PC-9 (cell line): ENCODE measurements at regions of chr3 and their contacts with region 1.

Region 1: DNA sequence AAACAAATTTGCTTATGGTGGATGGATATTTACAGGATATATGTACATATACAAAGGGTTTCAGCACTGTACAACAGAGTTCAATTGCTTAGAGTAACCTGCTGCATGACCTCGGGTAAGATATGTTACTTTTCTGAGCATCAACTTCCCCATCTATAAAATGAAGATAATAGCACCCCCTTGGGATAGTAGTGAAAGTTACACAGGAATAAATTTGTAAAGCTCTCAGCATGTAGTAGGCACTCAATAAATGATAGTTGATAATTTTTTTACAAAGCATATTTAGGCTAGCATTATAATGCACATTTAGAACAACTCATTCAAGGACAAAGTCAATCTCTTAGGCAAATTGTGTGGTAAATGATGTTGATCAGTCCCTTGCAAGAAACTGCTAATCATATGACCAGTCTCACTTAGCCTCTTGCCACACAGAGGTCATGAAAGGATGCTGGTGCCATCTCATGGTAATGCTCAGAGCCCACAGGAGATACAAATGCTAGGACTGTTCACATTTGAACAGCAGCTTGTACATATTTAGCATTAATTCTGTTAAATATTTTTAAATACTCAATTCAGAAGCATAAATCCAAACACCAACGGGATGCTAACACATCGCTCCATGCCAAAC is 123.9 kb downstream of the MAGI1 start:
- DNase-seq: no peak
- H3K4me3 ChIP-seq: no peak overlapping the region
- H3K27ac ChIP-seq: no peak overlapping the region
- H3K4me1 ChIP-seq: no peaks in the 10 kb centered on the region
- H3K27me3 ChIP-seq: no peaks in the 10 kb centered on the region
- CTCF ChIP-seq: no peak; the same call in 1 of the 2 replicates

Region 2: DNA sequence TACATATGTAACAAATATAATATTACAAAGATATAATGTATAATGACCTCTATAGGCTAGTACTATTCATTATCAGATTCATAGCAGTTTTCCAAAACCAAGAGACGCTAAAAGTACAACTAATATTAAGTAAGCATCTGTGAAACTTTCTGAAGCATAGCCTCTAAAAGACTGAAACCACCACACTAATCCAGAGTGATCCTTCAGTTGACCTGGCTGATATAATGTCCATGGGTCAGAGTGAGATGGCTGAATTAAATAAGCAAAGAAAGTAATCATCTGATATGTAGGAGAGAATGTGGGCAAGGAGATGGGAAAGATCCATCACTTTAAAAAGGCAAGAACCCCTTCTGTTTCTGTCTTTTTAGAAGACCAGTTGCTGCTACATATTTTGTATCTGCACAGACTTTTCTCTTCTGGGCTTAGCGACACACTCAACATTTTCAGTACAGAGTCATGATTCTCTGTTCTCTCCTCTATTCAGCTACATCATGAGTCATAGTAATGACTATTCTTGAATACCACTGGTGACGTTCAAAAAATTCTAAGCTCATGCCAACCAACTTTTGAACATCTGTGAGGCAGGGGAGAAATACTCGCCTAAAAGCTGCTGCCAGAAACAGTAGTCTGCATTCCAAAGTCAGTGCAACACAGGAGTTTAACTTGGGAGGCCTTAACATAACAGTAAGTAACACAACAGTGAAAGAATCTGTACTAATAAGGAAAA is 25.7 kb before region 1 on chr3:
- CTCF ChIA-PET with region 1: no interaction called
- POLR2A ChIA-PET with region 1: no interaction called
- intact Hi-C with region 1: no loop called
- DNase-seq: peak; percentile 10 to 54
- H3K4me3 ChIP-seq: no peak overlapping the region
- H3K27ac ChIP-seq: no peak overlapping the region
- H3K4me1 ChIP-seq: peaks cover under 1% of the 10 kb centered on the region
- H3K27me3 ChIP-seq: no peaks in the 10 kb centered on the region
- CTCF ChIP-seq: no peak

Region 3: DNA sequence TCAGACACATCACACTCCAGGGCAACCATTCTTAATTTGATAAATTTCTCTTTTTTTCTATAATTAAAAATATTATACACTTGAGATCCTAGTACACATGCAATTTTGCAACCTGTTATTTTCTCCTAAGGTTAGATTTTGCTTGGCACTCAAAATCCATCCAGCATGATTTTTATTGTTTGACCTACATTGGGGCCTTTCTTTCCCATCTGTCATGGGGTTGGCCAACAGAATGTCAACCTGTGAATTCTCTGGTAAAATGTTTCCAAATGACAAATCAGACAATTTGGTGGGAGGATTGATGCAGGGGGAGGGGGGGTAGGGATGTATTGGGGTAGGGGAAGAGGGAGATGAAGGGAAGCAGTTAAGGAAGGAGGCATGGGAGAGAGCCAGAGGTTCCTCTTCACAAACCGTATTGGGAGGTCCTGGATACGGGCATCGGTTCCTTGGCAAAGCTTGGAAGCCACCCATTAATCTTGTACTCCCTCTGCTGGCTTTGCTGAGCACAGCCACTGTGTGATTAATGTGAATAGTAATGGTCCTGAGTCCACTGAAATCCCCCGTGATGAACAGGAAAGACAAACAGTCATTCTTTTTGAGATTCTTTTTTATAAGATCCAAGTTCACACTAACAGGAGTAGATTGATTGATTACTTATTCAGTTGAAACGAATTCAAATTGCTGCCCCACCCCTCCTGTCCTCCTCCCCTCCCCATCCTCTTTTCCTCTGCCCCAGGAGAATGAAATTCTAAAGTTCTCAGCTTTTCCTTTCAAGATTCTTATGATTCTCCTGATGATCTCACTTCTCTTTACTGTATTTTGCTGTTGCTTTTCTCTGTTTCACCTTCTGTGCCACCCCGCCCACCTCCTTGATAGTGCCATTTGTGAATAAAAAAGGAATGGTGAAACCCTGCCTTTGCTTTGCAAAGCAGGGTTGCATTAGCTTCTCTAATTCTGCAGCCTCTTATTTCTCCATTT is 223.8 kb after region 1 on chr3:
- CTCF ChIA-PET with region 1: no interaction called
- POLR2A ChIA-PET with region 1: no interaction called
- intact Hi-C with region 1: loop called (anchors 10 kb)
- DNase-seq: peak; percentile 53 to 57
- H3K4me3 ChIP-seq: no peak overlapping the region
- H3K27ac ChIP-seq: no peak overlapping the region
- H3K4me1 ChIP-seq: peaks cover 14% of the 10 kb centered on the region
- H3K27me3 ChIP-seq: no peaks in the 10 kb centered on the region
- CTCF ChIP-seq: peak; percentile 77